Stomach (tissue), 19 donors: ENCODE measurements at regions of chr7 and their contacts with region 1.

Region 1: DNA sequence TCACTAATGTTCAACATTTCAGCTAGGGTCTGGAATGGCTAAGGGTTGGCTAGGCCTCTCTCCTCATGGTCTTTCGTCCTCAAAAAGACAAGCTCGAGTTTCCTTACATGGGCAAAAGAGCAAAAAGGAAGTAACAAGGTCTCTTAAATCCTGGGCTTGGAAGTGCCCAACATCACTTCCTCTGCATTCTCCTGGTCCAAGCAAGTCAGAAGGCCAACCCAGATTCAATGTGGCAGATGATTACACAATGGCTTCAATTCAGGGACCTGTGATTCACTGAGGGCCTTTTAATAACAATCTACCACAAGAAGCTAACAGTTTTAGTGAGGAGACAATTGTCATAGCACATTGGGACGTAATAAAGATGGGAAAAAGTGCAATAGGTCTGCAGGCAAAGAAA is 4.4 kb upstream of the NUP205 start:
- DNase-seq: no peak
- H3K4me3 ChIP-seq: no peak overlapping the region
- H3K27ac ChIP-seq: no peak overlapping the region
- H3K4me1 ChIP-seq: peaks cover 0 to 4% (median 2%) of the 10 kb centered on the region in 4 donors
- H3K27me3 ChIP-seq: no peaks in the 10 kb centered on the region
- CTCF ChIP-seq: no peak
- EP300 ChIP-seq: no peak
- POLR2A ChIP-seq: no peak

Region 2: GRCh38 chr7:135519233-135519688 is 34.1 kb before region 1 on chr7:
- intact Hi-C with region 1: loop called (anchors 5 kb)
- DNase-seq: peak in 1 of 2 donors; percentile 52
- H3K4me3 ChIP-seq: no peak overlapping the region
- H3K27ac ChIP-seq: no peak overlapping the region
- H3K4me1 ChIP-seq: no peaks in the 10 kb centered on the region
- H3K27me3 ChIP-seq: no peaks in the 10 kb centered on the region
- CTCF ChIP-seq: no peak
- EP300 ChIP-seq: no peak
- POLR2A ChIP-seq: no peak

Region 3: GRCh38 chr7:135672560-135673359 is 119.4 kb after region 1 on chr7:
- intact Hi-C with region 1: no loop called
- DNase-seq: peak in 1 of 2 donors; percentile 77
- H3K4me3 ChIP-seq: no peak overlapping the region
- H3K27ac ChIP-seq: peak overlapping the region in 1 of 5 donors; percentile 35
- H3K4me1 ChIP-seq: peaks cover 0 to 40% (median 18%) of the 10 kb centered on the region in 4 donors
- H3K27me3 ChIP-seq: no peaks in the 10 kb centered on the region
- CTCF ChIP-seq: peak in 5 of 7 experiments; percentile 59 to 79 (median 65)
- EP300 ChIP-seq: no peak
- POLR2A ChIP-seq: no peak